WTC11 (cell line): ENCODE measurements at regions of chr1 and their contacts with region 1.

Region 1: GRCh38 chr1:204714861-204715511 is 29.4 kb upstream of the LRRN2 start:
- DNase-seq: peak; percentile 68
- ATAC-seq: peak; percentile 55
- H3K4me3 Mint-ChIP-seq: peak overlapping the region; percentile 50
- H3K27ac Mint-ChIP-seq: peak overlapping the region; percentile 86
- H3K4me1 Mint-ChIP-seq: peaks cover 66% of the 10 kb centered on the region
- H3K27me3 Mint-ChIP-seq: peaks cover 94% of the 10 kb centered on the region
- CTCF ChIP-seq: no peak

Region 2: GRCh38 chr1:204623894-204624361 is 91.1 kb before region 1 on chr1:
- CTCF ChIA-PET with region 1: interaction called, 12 read pairs
- POLR2A ChIA-PET with region 1: interaction called, 3 read pairs
- DNase-seq: peak; percentile 63
- ATAC-seq: peak; percentile 65
- H3K4me3 Mint-ChIP-seq: no peak overlapping the region
- H3K27ac Mint-ChIP-seq: no peak overlapping the region
- H3K4me1 Mint-ChIP-seq: peaks cover 29% of the 10 kb centered on the region
- H3K27me3 Mint-ChIP-seq: no peaks in the 10 kb centered on the region; the same call in 1 of the 2 replicates
- CTCF ChIP-seq: no peak

Region 3: GRCh38 chr1:204651843-204652421 is 63.1 kb before region 1 on chr1:
- CTCF ChIA-PET with region 1: interaction called, 10 read pairs
- POLR2A ChIA-PET with region 1: no interaction called
- DNase-seq: peak; percentile 50
- ATAC-seq: peak; percentile 72
- H3K4me3 Mint-ChIP-seq: peak overlapping the region; percentile 43
- H3K27ac Mint-ChIP-seq: no peak overlapping the region
- H3K4me1 Mint-ChIP-seq: peaks cover 43% of the 10 kb centered on the region
- H3K27me3 Mint-ChIP-seq: peaks cover 18% of the 10 kb centered on the region
- CTCF ChIP-seq: no peak

Region 4: DNA sequence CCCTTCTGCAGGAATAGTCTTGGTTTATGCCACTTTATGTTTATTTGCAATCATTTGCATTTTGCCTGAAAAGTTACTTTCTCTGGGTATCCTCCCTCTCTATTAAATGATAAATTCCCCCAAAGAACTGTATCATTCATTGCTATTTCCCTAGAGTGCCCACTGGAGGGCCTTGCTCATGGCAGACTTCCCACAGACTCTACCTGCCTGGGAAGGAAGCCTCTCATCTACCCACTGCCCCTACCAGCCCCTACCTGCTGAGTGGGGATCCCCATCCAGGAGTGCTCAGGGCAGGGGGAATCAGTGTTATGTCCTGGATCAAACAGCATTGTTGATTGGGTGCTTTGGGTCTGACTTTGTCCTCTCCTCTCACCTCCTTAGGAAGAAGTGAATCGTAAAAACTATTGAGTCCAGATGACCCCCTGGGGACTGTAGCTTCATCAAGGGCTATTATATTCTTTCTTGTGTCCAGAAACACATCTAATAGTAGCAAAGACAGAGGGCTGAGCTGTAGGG is 22.6 kb before region 1 on chr1:
- CTCF ChIA-PET with region 1: interaction called, 11 read pairs
- POLR2A ChIA-PET with region 1: no interaction called
- DNase-seq: no peak
- ATAC-seq: peak; percentile 66
- H3K4me3 Mint-ChIP-seq: peak overlapping the region; percentile 28
- H3K27ac Mint-ChIP-seq: no peak overlapping the region
- H3K4me1 Mint-ChIP-seq: peaks cover 28% of the 10 kb centered on the region
- H3K27me3 Mint-ChIP-seq: peaks cover 56% of the 10 kb centered on the region
- CTCF ChIP-seq: no peak

Region 5: DNA sequence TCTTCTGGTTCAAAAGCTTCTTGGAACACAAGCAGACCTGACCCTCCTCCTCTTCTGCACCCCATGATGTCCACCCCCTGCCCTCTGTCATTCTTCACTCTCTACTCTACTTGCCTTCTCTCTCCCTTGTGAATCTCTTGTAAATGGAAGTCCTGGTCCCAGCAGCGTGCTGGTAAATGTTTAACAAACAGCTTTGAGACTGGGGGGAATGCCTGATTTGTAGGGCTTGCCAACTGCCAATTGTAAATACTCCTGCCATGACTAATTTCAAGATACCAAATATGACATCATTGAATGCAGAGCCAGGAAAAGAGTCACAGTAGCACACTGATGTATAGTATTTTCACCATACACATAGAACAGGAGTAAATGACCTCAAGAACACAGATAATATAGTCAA is 11.5 kb after region 1 on chr1:
- CTCF ChIA-PET with region 1: interaction called, 11 read pairs
- POLR2A ChIA-PET with region 1: no interaction called
- DNase-seq: no peak
- ATAC-seq: no peak
- H3K4me3 Mint-ChIP-seq: no peak overlapping the region
- H3K27ac Mint-ChIP-seq: no peak overlapping the region
- H3K4me1 Mint-ChIP-seq: peaks cover 23% of the 10 kb centered on the region
- H3K27me3 Mint-ChIP-seq: peaks cover 64% of the 10 kb centered on the region
- CTCF ChIP-seq: no peak

Region 6: DNA sequence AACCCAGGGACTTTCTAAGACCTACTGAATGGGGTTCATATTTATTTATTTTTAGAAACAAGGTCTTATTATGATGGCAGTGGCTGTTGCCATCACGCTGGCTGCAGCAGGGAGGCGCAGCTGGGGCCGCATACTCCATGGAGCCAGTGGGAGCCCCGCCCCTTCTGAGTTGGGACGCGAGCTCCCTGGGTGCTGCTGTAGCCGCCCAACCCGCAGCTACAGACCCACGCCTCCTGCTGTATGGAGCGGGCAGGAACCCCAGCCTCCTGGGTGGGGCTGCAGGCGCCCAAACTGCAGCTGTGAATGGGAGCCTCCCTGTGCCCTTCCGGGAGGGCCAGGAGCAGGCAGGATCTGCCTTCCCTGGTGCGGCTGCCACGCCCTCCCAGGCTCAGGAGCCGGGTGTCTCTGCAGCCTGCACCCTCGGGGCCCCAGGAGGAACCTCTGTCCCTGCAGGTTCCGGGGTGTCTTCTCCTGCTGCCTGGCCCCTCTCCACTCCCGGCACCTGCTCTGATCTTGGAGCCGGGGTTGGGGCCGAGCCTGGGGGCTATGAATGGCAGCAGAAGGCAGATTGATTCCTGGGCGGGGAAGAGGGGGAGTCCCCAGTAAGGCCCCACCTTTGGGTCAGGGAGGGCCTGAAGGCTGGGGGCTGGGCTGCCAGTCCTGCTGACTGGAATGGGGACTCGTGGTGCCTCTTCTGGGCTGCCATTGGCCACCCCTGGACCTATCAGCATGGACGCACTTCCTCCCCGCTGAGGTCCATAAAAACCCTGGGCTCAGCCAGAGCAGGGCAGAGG is 37.1 kb after region 1 on chr1:
- CTCF ChIA-PET with region 1: interaction called, 58 read pairs
- POLR2A ChIA-PET with region 1: no interaction called
- DNase-seq: peak; percentile 73
- ATAC-seq: peak; percentile 85
- H3K4me3 Mint-ChIP-seq: 0 out of 2 replicates have a peak overlapping the region, but pooled peaks have one; percentile 25
- H3K27ac Mint-ChIP-seq: no peak overlapping the region
- H3K4me1 Mint-ChIP-seq: peaks cover 24% of the 10 kb centered on the region
- H3K27me3 Mint-ChIP-seq: peaks cover 12% of the 10 kb centered on the region
- CTCF ChIP-seq: no peak

Region 7: DNA sequence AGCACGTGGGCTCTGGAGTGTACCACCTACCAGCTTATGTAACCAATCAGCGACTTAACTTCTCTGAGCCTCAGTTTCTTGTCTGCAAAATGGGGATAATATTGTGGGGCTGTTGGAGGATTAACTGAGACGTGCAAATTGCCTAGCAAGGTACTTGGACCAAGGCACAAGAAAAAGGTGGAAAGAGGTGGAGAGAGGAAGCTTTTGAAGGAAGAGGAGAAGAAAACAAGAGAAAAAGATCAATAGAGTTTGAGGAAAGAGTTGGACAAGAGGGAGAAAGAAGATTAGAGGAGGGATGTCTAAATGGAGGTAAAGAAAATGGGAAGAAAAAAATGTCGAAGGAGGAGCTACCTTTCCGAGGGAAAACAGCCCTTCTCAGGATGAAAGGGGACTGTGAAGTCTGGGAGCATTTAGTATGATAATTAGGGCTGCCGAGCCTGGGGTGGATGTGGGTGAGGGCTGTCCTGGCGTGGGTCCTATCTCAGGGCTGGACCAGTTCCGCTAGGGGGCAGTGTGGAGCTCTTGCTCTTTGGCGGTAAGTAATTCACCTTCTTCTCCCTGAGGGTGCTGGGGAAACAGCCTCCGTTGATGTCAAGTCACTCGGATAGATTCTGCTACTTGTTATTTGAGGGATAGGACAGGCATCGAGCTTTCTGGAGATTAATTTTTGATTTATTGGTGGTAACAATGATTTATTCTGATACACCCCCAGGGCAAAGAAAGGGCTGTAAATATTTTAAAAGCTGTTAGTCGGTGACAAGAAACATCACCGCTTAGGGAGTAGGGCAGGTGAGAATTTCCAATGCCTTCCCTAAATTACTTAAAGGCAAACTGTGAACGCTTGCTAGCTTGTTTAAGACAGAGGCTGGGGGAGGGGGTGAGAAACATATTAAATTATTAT is 76.7 kb after region 1 on chr1:
- CTCF ChIA-PET with region 1: interaction called, 27 read pairs
- POLR2A ChIA-PET with region 1: no interaction called
- DNase-seq: peak; percentile 95
- ATAC-seq: peak; percentile 96
- H3K4me3 Mint-ChIP-seq: no peak overlapping the region
- H3K27ac Mint-ChIP-seq: no peak overlapping the region
- H3K4me1 Mint-ChIP-seq: peaks cover 12% of the 10 kb centered on the region
- H3K27me3 Mint-ChIP-seq: peaks cover 11% of the 10 kb centered on the region
- CTCF ChIP-seq: peak; percentile 90